ENCODE measurements at regions of chr17 and their contacts with region 1.

Region 1: DNA sequence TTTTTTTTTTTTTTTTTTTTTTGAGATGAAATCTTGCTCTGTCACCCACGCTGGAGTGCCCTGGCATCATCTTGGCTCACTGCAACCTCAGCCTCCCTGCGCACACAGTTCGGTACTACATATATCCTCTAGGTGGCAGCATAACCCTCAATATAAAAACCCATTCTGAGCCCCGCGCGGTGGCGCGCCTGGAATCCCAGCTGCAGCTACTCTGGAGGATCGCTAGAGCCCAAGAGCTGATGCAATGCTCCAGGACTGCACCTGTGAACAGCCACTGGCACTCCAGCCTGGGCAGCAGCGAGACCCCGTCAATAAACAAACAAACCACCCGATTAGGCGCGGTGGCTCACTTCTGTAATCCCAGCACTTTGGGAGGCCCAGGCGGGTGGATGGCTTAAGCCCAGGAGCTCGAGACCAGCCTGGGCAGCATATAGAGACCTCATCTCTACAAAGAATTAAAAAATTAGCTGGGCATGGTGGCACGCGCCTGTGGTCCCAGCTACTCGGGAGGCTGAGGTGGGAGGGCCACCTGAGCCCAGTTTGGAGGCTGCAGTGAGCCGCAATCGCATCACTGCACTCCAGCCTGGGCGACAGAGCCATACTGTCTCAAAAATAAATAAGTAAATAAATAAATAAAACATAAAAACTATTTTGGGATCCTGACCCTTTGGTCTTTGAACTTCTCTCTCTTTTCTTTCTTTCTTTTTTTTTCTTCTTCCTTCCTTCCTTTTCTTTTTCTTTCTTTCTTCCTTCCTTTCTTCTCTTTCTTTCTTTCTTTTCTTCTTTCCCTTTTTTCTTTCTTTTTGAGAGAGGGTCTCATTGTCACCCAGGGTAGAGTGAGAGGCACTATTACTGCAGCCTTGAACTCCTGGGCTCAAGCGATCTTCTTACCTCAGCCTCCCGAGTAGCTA is 15.4 kb upstream of the AKAP10 start:
- DNase-seq: peak; percentile 92
- ATAC-seq: peak; percentile 99

Region 2: DNA sequence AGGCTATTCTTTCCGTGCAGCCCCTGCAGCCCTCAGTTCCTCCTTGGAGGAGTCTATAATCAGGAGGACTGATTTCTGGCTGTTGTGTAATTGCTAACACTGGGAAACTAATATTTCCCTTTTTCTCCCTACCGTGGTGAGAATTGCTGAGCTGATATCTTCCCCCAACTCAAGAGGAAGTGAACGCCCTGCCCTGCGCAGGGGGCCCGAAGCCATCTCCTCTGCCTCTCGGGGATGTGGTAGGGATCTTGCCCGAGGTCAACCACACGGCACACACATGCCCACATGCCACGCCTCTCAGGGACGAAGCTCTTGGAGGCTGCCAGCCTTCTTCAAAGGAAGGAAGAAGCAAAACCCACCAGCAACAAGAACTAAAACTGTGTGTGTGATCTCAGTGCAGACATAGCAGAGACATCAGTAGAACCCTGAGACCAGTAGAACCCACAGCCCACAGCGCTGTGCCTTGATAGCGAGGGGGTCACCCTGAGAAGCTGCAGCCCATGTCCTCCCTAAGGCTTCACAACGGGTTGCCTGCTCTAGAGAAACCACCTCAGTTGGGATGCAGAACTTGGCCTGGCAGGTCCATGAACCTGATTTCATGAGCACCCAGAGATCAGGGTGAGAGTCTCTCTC is 116.4 kb before region 1 on chr17:
- intact Hi-C with region 1: no loop called
- DNase-seq: peak; percentile 65
- ATAC-seq: peak; percentile 88

Region 3: DNA sequence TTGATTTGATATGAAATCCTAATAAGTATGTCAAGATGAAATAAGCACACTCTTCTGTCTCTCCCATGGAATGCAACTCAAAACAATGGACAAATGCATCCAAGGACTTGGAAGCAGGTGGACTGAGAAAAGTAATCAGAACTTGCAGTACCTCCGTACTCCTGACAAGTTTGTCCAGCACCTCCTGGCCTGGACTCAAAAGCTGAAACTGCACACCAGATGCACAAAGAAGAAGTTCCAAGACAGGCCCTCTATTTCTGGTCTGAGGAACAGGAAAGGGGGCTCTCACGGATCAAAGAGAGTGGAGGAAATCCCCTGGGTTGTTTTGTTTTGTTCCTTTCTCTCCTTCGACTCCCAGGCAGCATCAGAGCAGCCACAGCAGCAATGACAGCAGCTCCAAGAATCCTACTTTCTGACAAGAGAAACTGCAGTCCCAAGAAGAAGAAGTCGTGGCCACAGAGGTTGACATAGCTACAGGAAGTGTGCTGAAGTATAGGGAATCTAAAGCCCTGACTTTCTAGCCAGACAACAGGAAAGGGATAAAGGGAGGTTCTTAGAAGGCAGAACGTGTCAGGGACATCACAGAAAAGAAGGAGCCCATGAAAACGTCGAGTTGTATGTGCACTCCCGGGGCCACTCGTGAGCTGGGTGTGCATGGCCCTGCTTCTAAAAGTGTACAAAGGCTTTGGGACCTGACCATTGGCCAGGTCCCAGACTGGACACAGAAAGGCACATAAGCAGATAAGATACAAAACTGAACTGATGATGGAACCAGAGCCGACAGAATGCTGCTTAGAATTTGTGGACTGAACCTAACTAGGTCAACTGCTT is 44.7 kb before region 1 on chr17:
- intact Hi-C with region 1: no loop called
- DNase-seq: no peak
- ATAC-seq: no peak

Region 4: GRCh38 chr17:20141198-20141972 is 148.3 kb after region 1 on chr17:
- intact Hi-C with region 1: no loop called
- DNase-seq: no peak
- ATAC-seq: no peak

Region 5: DNA sequence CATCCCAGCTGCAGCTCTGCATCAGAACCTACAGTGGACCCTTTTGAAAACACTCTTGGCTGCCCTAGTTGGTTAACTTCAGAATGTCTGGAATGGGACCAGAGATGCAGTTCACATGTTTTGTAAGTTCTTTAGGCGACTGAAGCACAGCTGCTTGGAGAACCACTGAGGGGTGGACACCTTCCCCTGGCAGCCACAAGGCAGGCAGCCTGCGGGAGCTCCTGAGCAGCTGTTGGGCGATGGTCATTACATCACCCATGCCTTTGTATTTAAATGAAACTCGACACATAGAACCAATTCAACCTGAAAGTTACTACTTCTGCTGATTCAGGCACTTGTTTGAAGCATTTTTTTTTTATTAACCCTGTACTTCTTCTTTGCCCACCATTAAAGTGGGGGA is 322.8 kb after region 1 on chr17:
- intact Hi-C with region 1: loop called (anchors 10 kb)
- DNase-seq: no peak
- ATAC-seq: no peak

Measured in sciatic nerve (tissue), 2 donors.